HEK293T (cell line): ENCODE measurements at regions of chr19 and their contacts with region 1.

Region 1: GRCh38 chr19:48933382-48933932 is at the start of gene DHDH:
- DNase-seq: peak; percentile 85

Region 2: DNA sequence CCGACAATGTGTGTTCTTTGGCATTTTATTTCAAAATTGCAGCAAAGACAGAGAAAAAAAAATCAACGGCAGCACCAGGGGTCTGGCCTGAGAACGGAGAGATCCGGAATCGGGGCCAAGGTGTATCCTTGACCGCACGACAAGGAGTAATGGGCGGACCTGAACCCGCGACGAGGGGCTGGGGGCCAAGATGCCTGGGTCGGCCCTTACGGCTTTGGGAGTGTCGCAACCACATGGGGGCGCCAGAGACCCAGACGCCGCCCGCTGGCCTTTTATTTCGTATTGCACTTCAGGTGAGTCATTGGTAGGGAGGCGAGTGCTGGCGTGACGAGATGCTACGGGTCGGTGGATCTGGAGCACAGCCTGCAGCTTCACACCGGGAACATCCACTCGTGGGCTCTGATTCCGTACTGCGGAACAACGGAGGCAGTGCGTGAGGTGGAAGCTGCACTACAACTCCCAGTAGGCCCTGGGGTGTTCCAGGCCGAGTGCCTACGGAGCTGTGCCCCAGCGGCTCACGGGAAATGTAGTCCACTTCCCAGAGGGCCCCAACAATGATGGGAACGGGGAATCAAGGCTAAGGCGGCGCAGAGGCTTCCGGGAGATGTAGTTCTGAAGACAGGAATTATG is 138.3 kb before region 1 on chr19:
- CTCF ChIA-PET with region 1: no interaction called
- POLR2A ChIA-PET with region 1: no interaction called
- DNase-seq: peak; percentile 92

Region 3: GRCh38 chr19:48954595-48955310 is 21.3 kb after region 1 on chr19 and contains the start of gene BAX:
- CTCF ChIA-PET with region 1: interaction called, 3 read pairs
- POLR2A ChIA-PET with region 1: interaction called, 13 read pairs
- DNase-seq: peak; percentile 98